Left ventricle myocardium inferior (tissue), 1 donor: ENCODE measurements at regions of chr7 and their contacts with region 1.

Region 1: DNA sequence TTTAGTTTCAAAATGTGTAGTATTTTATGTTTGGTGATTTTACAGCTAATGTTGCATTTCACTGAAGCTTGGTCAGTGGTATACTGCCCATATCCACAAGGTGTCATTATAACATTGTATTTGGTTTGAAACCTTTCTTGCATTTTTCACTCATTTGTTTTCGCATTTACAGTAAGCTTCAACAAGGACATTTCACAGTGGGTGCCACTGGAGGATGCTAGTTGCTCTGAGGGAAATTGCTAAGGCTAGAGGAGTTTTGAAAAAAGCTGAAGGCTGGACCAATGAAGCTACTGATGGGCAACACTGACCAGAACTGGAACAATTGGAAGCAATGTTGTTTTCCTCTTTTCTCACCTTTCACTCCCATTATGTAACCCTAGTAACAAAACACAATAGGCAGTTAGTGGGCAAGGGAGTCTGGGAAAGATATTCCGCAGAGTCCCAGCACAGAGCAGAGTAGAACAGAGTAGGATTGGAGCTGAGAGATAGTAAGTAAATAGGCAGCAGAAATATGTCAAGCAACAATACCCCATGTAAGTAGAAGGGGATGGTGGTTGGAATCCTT is 23.6 kb upstream of the SRI start:
- DNase-seq: no peak
- H3K4me3 ChIP-seq: no peak overlapping the region
- H3K27ac ChIP-seq: no peak overlapping the region
- H3K4me1 ChIP-seq: peaks cover 5% of the 10 kb centered on the region
- H3K27me3 ChIP-seq: no peaks in the 10 kb centered on the region
- CTCF ChIP-seq: peak; percentile 83

Region 2: GRCh38 chr7:87837597-87837996 is 405.8 kb before region 1 on chr7:
- intact Hi-C with region 1: no loop called
- DNase-seq: no peak
- H3K4me3 ChIP-seq: no peak overlapping the region
- H3K27ac ChIP-seq: no peak overlapping the region
- H3K4me1 ChIP-seq: no peaks in the 10 kb centered on the region
- H3K27me3 ChIP-seq: no peaks in the 10 kb centered on the region
- CTCF ChIP-seq: peak; percentile 10

Region 3: GRCh38 chr7:88357781-88358525 is 114.5 kb after region 1 on chr7:
- intact Hi-C with region 1: loop called (anchors 5 kb)
- DNase-seq: no peak
- H3K4me3 ChIP-seq: peak overlapping the region; percentile 49
- H3K27ac ChIP-seq: no peak overlapping the region
- H3K4me1 ChIP-seq: peaks cover 5% of the 10 kb centered on the region
- H3K27me3 ChIP-seq: no peaks in the 10 kb centered on the region
- CTCF ChIP-seq: peak; percentile 77